ENCODE measurements at regions of chr2 and their contacts with region 1.

Region 1: GRCh38 chr2:51454177-51454576 is 422.2 kb upstream of the NRXN1 start:
- DNase-seq: no peak
- H3K4me3 ChIP-seq: no peak overlapping the region
- H3K27ac ChIP-seq: no peak overlapping the region
- H3K4me1 ChIP-seq: no peaks in the 10 kb centered on the region
- H3K27me3 ChIP-seq: no peaks in the 10 kb centered on the region
- CTCF ChIP-seq: no peak
- POLR2A ChIP-seq: no peak

Region 2: DNA sequence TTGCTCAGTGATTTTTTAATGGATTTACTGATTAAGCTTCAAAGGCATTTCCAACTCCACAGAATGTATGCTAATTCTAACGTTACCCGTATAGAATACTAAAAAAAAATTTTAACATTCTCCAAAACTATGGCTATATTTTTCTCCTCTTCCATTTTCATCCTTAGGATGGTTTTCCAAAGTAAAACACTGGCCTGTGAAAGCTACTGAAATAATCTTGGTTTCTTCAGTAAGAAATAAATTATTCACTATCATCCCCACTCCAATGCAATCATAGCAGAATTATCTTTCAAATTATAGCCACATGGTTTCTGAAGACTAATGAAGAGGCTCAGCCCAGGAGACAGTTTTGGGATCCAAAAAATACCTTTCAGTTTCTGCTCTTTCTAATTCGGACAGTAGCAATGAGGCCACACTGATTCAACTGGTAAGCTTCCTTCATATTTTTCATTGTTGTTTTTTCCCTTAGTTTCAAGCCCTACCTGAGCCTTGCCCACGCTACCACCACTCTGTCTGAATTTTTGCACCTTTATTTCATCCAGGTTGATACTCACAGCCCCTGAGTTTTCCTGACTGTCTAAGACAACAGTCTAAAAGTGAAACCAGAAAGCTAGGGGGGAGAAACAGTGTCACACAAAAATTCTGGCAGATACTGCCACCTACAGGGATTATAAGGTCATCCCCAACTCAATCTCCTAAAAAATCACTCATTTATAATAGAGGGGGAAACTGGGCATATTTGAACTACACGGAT is 1310.2 kb before region 1 on chr2:
- intact Hi-C with region 1: no loop called
- DNase-seq: no peak
- H3K4me3 ChIP-seq: peak overlapping the region; percentile 25 to 63 (median 43)
- H3K27ac ChIP-seq: peak overlapping the region; percentile 52 to 78
- H3K4me1 ChIP-seq: no peaks in the 10 kb centered on the region
- H3K27me3 ChIP-seq: no peaks in the 10 kb centered on the region
- CTCF ChIP-seq: peak; percentile 54 to 77 (median 57)
- POLR2A ChIP-seq: no peak

Region 3: GRCh38 chr2:50863218-50863617 is 591.0 kb before region 1 on chr2:
- intact Hi-C with region 1: loop called (anchors 5 kb)
- DNase-seq: no peak
- H3K4me3 ChIP-seq: no peak overlapping the region
- H3K27ac ChIP-seq: no peak overlapping the region
- H3K4me1 ChIP-seq: no peaks in the 10 kb centered on the region
- H3K27me3 ChIP-seq: no peaks in the 10 kb centered on the region
- CTCF ChIP-seq: no peak
- POLR2A ChIP-seq: no peak

Region 4: DNA sequence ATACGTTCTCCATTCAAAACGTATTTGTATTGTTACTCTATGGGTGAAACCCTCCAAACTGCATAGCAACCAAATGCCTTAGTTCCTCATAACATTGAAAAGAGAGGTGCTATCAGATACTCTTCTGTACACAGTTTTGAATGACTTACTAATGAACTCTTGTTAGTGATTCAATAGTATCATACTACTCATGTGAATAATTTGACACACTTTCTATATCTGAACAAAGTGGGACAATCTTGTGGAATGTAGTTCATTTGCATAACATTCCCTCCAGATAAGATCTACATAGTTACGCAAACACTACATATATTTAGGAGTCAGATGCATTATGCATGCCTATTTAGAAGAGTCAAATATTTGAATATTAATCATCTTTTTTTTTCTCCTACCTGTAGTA is 190.2 kb before region 1 on chr2:
- intact Hi-C with region 1: no loop called
- DNase-seq: no peak
- H3K4me3 ChIP-seq: no peak overlapping the region
- H3K27ac ChIP-seq: no peak overlapping the region
- H3K4me1 ChIP-seq: no peaks in the 10 kb centered on the region
- H3K27me3 ChIP-seq: no peaks in the 10 kb centered on the region
- CTCF ChIP-seq: no peak
- POLR2A ChIP-seq: no peak

Region 5: DNA sequence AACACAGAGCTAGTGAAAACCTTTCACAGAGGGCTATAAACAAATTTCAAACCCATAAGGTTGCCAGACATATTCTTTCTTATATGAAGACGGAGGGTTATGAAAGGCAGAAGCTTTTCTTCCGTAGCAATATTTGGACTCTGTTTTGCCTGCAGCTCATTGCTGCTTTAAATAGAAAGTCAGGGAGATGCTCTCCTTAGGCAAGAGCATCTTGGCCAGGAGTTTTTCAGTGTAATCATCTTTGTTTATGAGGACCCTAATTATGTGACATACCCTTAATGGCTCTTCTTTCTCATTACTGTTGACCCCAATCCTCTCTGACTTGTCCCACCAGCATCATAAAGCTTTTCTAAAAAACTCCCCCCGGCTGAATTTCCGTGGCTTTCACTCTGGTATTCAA is 11.1 kb after region 1 on chr2:
- intact Hi-C with region 1: no loop called
- DNase-seq: no peak
- H3K4me3 ChIP-seq: no peak overlapping the region
- H3K27ac ChIP-seq: no peak overlapping the region
- H3K4me1 ChIP-seq: no peaks in the 10 kb centered on the region
- H3K27me3 ChIP-seq: no peaks in the 10 kb centered on the region
- CTCF ChIP-seq: no peak
- POLR2A ChIP-seq: no peak

Measured in breast epithelium (tissue), 4 donors.